ENCODE measurements at regions of chr10 and their contacts with region 1.

Region 1: GRCh38 chr10:60444494-60445064 is 54.9 kb upstream of the ANK3 start:
- DNase-seq: no peak
- H3K4me3 ChIP-seq: no peak overlapping the region
- H3K27ac ChIP-seq: peak overlapping the region; percentile 29 to 82
- H3K4me1 ChIP-seq: peaks cover 5 to 34% of the 10 kb centered on the region in 2 donors
- H3K27me3 ChIP-seq: no peaks in the 10 kb centered on the region
- CTCF ChIP-seq: peak; percentile 37 to 69 (median 53)

Region 2: GRCh38 chr10:60480865-60481563 is 36.4 kb after region 1 on chr10:
- intact Hi-C with region 1: loop called (anchors 2 kb)
- DNase-seq: peak in 1 of 2 donors; percentile 68
- H3K4me3 ChIP-seq: peak overlapping the region in 1 of 2 donors; percentile 26
- H3K27ac ChIP-seq: no peak overlapping the region
- H3K4me1 ChIP-seq: no peaks in the 10 kb centered on the region
- H3K27me3 ChIP-seq: no peaks in the 10 kb centered on the region
- CTCF ChIP-seq: no peak

Region 3: DNA sequence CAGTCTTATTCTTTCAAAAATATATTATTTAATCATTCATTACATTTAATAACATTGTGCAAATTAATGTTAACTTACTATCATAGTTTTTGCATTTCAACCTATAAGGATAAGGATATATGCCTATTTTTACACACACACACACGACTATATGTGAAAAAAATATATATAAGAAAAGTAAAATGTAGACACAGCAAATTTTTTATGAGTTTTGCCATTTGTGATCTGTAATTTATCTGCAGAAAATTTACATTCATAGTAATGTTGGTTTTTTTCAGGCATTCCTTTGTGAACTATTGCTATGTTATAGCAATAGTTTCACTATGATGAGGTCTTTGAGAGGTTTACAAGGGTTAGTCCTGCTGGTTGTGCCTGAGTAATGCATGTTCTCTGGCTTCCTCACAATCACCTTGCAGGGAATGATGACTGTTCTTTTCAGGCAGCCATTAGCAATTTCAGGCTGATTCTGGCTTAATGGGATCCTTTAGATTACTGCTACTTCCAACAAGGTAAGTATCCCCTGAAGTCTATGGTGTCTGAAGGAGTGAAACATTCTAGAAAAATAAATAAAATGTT is 150.0 kb after region 1 on chr10:
- intact Hi-C with region 1: no loop called
- DNase-seq: no peak
- H3K4me3 ChIP-seq: no peak overlapping the region
- H3K27ac ChIP-seq: no peak overlapping the region
- H3K4me1 ChIP-seq: no peaks in the 10 kb centered on the region
- H3K27me3 ChIP-seq: no peaks in the 10 kb centered on the region
- CTCF ChIP-seq: no peak

Region 4: DNA sequence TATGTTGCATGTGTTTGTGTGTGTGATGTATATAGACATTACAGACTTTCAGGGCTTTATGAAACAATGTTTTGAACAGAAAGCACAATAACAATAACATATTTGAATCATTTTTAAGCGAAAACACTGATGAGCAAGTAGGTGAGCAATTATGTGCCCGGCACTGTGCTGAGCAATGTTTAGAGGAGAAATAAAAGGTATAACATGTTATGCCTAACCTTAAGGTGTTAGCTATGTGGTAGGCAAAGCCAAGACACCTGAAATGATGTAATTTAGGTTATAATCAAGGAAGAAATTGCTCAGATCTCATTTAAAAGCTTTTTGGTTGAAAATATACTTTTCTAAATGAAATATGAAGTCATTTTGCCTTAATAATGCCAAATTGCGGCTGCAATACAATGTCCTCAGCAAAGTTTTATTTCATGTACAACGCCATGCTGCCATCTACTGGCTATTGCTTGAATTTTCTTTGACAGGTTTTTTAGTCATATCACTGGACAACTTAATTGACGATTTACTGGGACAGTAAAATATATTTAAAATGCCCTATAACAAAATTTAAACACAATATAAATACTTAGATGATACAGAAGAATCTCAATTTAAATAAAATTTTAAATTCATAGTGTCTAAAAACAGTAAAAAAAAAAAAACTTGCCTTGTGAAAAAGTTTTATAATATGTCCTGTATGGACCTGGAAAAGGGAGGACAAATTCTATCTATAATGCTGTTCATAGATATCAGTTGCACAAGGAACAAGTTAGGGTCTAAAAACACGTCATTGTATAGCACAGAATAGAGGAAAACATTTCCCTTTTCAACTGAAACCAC is 202.6 kb after region 1 on chr10:
- intact Hi-C with region 1: loop called (anchors 1 kb)
- DNase-seq: no peak
- H3K4me3 ChIP-seq: no peak overlapping the region
- H3K27ac ChIP-seq: no peak overlapping the region
- H3K4me1 ChIP-seq: no peaks in the 10 kb centered on the region
- H3K27me3 ChIP-seq: no peaks in the 10 kb centered on the region
- CTCF ChIP-seq: peak; percentile 53 to 76 (median 65)

Region 5: DNA sequence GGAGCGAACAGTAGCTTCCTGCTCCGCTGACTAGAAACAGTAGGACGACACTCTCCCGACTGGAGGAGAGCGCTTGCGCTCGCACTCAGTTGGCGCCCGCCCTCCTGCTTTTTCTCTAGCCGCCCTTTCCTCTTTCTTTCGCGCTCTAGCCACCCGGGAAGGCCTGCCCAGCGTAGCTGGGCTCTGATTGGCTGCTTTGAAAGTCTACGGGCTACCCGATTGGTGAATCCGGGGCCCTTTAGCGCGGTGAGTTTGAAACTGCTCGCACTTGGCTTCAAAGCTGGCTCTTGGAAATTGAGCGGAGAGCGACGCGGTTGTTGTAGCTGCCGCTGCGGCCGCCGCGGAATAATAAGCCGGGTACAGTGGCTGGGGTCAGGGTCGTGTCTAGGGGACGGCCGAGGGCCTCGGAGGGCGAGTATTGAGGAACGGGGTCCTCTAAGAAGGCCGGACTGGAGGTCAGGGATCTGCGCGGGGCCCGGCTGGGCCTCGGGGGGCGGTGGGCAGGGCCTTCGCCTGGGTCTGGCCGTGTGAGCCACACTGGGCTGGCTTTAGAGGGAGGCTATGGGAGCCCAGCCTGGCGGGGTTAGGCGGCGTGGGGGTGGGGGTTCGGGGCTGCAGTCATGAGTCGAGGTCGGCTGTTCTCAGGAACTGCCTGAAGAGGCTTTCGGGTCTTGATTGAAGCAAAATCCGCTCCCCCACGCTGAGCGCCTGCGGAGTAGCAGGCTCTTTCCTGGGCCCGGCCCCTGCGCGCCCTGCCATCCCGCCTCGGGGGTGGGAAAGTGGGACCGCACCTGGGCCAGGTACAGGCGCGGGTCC is 333.8 kb after region 1 on chr10 and contains the start of gene CDK1:
- intact Hi-C with region 1: loop called (anchors 10 kb)
- DNase-seq: peak; percentile 85 to 97
- H3K4me3 ChIP-seq: peak within 1 kb of the TSS; percentile 61 to 73
- H3K27ac ChIP-seq: no peak within 1 kb of the TSS
- H3K4me1 ChIP-seq: peaks cover 0 to 8% of the 10 kb centered on the region in 2 donors
- H3K27me3 ChIP-seq: no peaks in the 10 kb centered on the region
- CTCF ChIP-seq: no peak
- total RNA-seq, gene CDK1: not detected